ENCODE measurements at regions of chr12 and their contacts with region 1.

Region 1: GRCh38 chr12:10891937-10892336 is 7.9 kb upstream of the PRH1 start:
- DNase-seq: no peak
- ATAC-seq: no peak
- H3K4me3 ChIP-seq: no peak overlapping the region
- H3K4me3 Mint-ChIP-seq: no peak overlapping the region
- H3K27ac ChIP-seq: no peak overlapping the region
- H3K27ac Mint-ChIP-seq: no peak overlapping the region
- H3K4me1 ChIP-seq: no peaks in the 10 kb centered on the region
- H3K4me1 Mint-ChIP-seq: no peaks in the 10 kb centered on the region
- H3K27me3 ChIP-seq: no peaks in the 10 kb centered on the region
- H3K27me3 Mint-ChIP-seq: no peaks in the 10 kb centered on the region

Region 2: GRCh38 chr12:11183011-11183410 is 291.1 kb after region 1 on chr12:
- CTCF ChIA-PET with region 1: no interaction called
- POLR2A ChIA-PET with region 1: no interaction called
- DNase-seq: no peak
- ATAC-seq: no peak
- H3K4me3 ChIP-seq: no peak overlapping the region
- H3K4me3 Mint-ChIP-seq: no peak overlapping the region
- H3K27ac ChIP-seq: no peak overlapping the region
- H3K27ac Mint-ChIP-seq: no peak overlapping the region
- H3K4me1 ChIP-seq: no peaks in the 10 kb centered on the region
- H3K4me1 Mint-ChIP-seq: no peaks in the 10 kb centered on the region
- H3K27me3 ChIP-seq: no peaks in the 10 kb centered on the region
- H3K27me3 Mint-ChIP-seq: no peaks in the 10 kb centered on the region

Region 3: GRCh38 chr12:11209108-11209507 is 317.2 kb after region 1 on chr12:
- CTCF ChIA-PET with region 1: interaction called in 1 of 2 experiments, 13 read pairs
- POLR2A ChIA-PET with region 1: no interaction called
- DNase-seq: no peak
- ATAC-seq: no peak
- H3K4me3 ChIP-seq: no peak overlapping the region
- H3K4me3 Mint-ChIP-seq: no peak overlapping the region
- H3K27ac ChIP-seq: no peak overlapping the region
- H3K27ac Mint-ChIP-seq: no peak overlapping the region
- H3K4me1 ChIP-seq: no peaks in the 10 kb centered on the region
- H3K4me1 Mint-ChIP-seq: no peaks in the 10 kb centered on the region
- H3K27me3 ChIP-seq: no peaks in the 10 kb centered on the region
- H3K27me3 Mint-ChIP-seq: no peaks in the 10 kb centered on the region